T-cell (primary cell): ENCODE measurements at regions of chr9 and their contacts with region 1.

Region 1: GRCh38 chr9:109047259-109047658 is 34.0 kb upstream of the CTNNAL1 start:
- DNase-seq: no peak
- ATAC-seq: no peak
- H3K4me3 ChIP-seq: no peak overlapping the region
- H3K4me3 Mint-ChIP-seq: no peak overlapping the region
- H3K27ac ChIP-seq: no peak overlapping the region
- H3K27ac Mint-ChIP-seq: no peak overlapping the region
- H3K4me1 ChIP-seq: no peaks in the 10 kb centered on the region
- H3K4me1 Mint-ChIP-seq: peaks cover 0 to 4% (median 3%) of the 10 kb centered on the region in 3 donors
- H3K27me3 ChIP-seq: no peaks in the 10 kb centered on the region
- H3K27me3 Mint-ChIP-seq: no peaks in the 10 kb centered on the region

Region 2: GRCh38 chr9:109060222-109060621 is 13.0 kb after region 1 on chr9:
- CTCF ChIA-PET with region 1: no interaction called
- POLR2A ChIA-PET with region 1: no interaction called
- DNase-seq: no peak
- ATAC-seq: no peak
- H3K4me3 ChIP-seq: no peak overlapping the region
- H3K4me3 Mint-ChIP-seq: no peak overlapping the region
- H3K27ac ChIP-seq: no peak overlapping the region
- H3K27ac Mint-ChIP-seq: no peak overlapping the region
- H3K4me1 ChIP-seq: no peaks in the 10 kb centered on the region
- H3K4me1 Mint-ChIP-seq: peaks cover 0 to under 1% (median 0%) of the 10 kb centered on the region in 3 donors
- H3K27me3 ChIP-seq: no peaks in the 10 kb centered on the region
- H3K27me3 Mint-ChIP-seq: no peaks in the 10 kb centered on the region

Region 3: GRCh38 chr9:109072128-109072692 is 25.0 kb after region 1 on chr9:
- CTCF ChIA-PET with region 1: no interaction called
- POLR2A ChIA-PET with region 1: no interaction called
- DNase-seq: no peak
- ATAC-seq: no peak
- H3K4me3 ChIP-seq: no peak overlapping the region
- H3K4me3 Mint-ChIP-seq: no peak overlapping the region
- H3K27ac ChIP-seq: no peak overlapping the region
- H3K27ac Mint-ChIP-seq: peak overlapping the region; percentile 9 to 19
- H3K4me1 ChIP-seq: no peaks in the 10 kb centered on the region
- H3K4me1 Mint-ChIP-seq: no peaks in the 10 kb centered on the region
- H3K27me3 ChIP-seq: no peaks in the 10 kb centered on the region
- H3K27me3 Mint-ChIP-seq: no peaks in the 10 kb centered on the region

Region 4: GRCh38 chr9:109182940-109183798 is 135.9 kb after region 1 on chr9:
- CTCF ChIA-PET with region 1: no interaction called
- POLR2A ChIA-PET with region 1: interaction called in 1 of 2 experiments, 16 read pairs
- DNase-seq: no peak
- ATAC-seq: no peak
- H3K4me3 ChIP-seq: no peak overlapping the region
- H3K4me3 Mint-ChIP-seq: no peak overlapping the region
- H3K27ac ChIP-seq: no peak overlapping the region
- H3K27ac Mint-ChIP-seq: no peak overlapping the region
- H3K4me1 ChIP-seq: peaks cover 6 to 13% of the 10 kb centered on the region in 2 experiments
- H3K4me1 Mint-ChIP-seq: peaks cover 12 to 18% (median 13%) of the 10 kb centered on the region in 3 donors
- H3K27me3 ChIP-seq: peaks cover 0 to 13% of the 10 kb centered on the region in 2 experiments
- H3K27me3 Mint-ChIP-seq: peaks cover 2 to 4% of the 10 kb centered on the region in 2 donors